ENCODE measurements at regions of chr1 and their contacts with region 1.

Region 1: DNA sequence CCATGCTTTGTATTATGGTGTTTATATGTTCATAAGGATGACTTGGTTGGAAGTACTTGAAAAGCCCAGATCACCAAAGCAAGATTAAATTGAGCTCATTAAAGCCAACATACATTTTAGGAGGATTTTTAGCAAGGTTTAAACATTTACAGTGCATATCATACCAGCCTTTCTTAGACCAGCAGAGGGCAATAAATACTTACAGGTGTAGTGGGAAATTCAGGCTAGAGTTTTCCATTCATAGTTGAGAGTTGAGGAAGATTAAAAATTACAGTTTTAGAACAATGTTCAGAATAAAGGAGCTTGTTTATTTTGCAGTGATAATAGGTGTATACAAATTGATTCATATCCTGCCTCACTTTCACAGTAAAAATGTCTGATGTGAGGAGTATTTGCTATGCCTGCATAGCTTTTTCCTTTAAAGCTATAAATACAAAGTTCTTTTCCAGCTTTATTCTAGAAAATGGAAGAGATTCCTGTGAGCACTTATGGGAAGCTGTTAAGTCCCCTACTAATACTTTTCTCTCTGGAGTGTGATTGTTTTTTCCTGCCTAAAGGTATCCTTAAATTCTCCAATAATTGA is 35.3 kb downstream of the DTL start:
- DNase-seq: no peak
- ATAC-seq: peak; percentile 85

Region 2: DNA sequence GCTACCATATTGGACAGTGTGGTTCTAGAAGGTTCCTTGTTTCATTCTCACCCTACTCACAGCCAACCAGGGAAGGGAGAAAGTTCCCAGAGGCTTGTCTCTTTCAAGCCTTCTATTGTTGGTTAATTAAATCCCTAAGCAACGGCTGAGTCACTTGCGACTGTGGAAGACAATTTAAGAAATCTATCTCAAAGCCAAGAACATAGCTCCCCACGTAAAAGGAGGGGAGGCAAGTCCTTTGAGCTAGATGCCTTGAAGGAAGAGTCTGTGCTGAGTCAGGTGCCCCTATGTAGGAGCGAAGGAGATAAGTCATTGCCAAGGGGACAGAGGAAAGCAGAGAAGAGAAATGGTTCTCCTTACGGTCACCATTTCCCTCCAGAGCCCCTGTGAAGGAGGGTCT is 135.0 kb after region 1 on chr1:
- intact Hi-C with region 1: no loop called
- DNase-seq: no peak
- ATAC-seq: no peak

Region 3: GRCh38 chr1:212291505-212292134 is 220.8 kb after region 1 on chr1:
- intact Hi-C with region 1: loop called (anchors 5 kb)
- DNase-seq: no peak
- ATAC-seq: peak; percentile 61

Region 4: DNA sequence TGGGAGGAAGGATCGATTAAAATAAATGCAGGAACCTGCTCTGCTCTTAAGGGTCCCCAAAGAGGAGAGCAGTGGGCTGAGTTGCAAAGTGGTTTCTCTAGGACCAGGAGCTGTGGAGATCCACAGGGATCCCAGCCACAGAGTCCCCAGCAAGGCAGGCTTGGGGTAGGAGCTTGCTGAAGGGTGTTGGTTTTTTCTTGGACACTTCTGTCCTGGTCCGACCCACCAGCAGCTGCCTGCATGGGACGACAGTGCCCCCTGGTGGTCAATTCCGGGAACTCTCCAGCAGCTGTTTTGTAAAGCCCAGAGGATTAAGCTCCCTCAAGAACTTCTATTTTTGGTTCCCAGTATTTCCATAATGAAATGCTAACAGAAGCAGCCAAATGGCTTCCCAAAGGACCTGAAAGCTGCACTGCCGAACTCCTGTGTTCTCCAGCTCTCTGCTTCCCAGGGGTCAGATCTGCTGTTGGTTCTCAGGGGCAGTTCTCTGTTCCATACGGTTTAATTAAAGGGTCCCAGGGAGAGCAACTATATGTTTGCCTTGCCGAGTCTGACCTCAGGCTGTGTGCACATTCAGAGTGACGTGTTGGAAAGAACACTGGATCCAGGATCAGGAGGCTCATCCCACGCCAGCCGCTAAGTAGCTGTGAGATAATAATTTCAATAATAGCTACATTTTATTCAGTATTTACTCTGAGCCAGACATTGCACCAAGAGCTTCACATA is 385.2 kb after region 1 on chr1:
- intact Hi-C with region 1: loop called (anchors 10 kb)
- DNase-seq: peak; percentile 94
- ATAC-seq: peak; percentile 82